ENCODE measurements at regions of chr2 and their contacts with region 1.

Region 1: DNA sequence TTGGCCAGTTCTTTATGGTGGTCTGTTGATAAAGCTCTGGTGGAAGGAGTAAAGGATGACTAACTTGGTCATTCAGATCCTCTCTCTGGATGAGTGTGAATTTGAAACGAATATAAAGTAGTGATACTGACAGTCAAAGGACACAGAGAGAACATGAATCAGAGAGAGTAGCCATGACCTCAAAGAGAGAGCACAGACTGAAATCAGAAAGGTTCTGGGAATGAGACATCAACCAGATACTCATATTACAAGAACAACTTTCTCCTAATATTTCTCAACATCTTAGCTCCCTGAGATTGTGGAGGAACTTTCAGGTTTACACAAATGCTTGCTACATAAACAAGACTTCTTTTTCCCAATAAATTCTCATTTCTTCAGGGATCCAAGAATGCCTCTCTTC is 849.1 kb upstream of the CHAC2 start:
- DNase-seq: no peak
- ATAC-seq: no peak
- H3K4me3 ChIP-seq: no peak overlapping the region
- H3K27ac ChIP-seq: no peak overlapping the region
- H3K4me1 ChIP-seq: no peaks in the 10 kb centered on the region
- H3K27me3 ChIP-seq: no peaks in the 10 kb centered on the region
- CTCF ChIP-seq: no peak

Region 2: GRCh38 chr2:52345676-52346075 is 572.9 kb before region 1 on chr2:
- intact Hi-C with region 1: no loop called
- DNase-seq: no peak
- ATAC-seq: no peak
- H3K4me3 ChIP-seq: no peak overlapping the region
- H3K27ac ChIP-seq: no peak overlapping the region
- H3K4me1 ChIP-seq: no peaks in the 10 kb centered on the region
- H3K27me3 ChIP-seq: no peaks in the 10 kb centered on the region
- CTCF ChIP-seq: no peak

Region 3: DNA sequence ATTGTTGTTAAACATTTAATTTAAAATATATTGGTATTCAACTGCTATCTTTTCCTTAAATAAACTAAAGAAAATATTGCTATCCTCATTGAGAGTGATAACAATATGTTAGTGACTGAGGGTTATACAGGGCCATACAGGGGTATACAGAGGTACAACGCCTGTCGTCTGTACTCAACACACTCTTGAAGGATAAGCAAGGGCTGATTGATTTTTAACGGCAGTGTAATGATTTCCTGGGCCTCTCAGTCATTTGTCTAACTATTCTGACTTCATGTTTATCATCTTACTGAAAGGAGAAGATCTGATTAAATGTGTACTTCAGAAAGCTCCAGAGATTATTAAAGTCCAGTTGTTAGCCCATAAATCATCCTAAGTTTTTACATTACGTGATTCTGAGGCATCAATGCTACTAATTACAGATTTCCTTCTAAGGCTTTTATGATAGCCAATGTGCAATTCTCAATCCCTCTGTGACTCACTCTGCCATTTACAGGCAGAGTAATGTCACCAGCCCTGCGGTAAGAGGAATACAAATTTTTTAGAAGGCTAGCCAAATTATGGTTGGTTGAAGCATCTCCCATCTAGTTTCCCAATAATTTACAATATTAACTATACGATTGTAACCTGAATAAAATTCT is 44.0 kb before region 1 on chr2:
- intact Hi-C with region 1: loop called in 1 of 10 experiments (anchors 1 kb)
- DNase-seq: no peak
- ATAC-seq: no peak
- H3K4me3 ChIP-seq: no peak overlapping the region
- H3K27ac ChIP-seq: no peak overlapping the region
- H3K4me1 ChIP-seq: no peaks in the 10 kb centered on the region
- H3K27me3 ChIP-seq: peaks cover 0 to 4% (median 0%) of the 10 kb centered on the region in 7 donors
- CTCF ChIP-seq: no peak

Region 4: GRCh38 chr2:53217250-53217649 is 298.7 kb after region 1 on chr2:
- intact Hi-C with region 1: no loop called
- DNase-seq: no peak
- ATAC-seq: no peak
- H3K4me3 ChIP-seq: no peak overlapping the region
- H3K27ac ChIP-seq: no peak overlapping the region
- H3K4me1 ChIP-seq: peaks cover 0 to 2% (median 0%) of the 10 kb centered on the region in 9 donors
- H3K27me3 ChIP-seq: no peaks in the 10 kb centered on the region
- CTCF ChIP-seq: no peak

Measured in heart right ventricle (tissue), 16 donors.